OCI-LY7 (cell line): ENCODE measurements at regions of chr16 and their contacts with region 1.

Region 1: DNA sequence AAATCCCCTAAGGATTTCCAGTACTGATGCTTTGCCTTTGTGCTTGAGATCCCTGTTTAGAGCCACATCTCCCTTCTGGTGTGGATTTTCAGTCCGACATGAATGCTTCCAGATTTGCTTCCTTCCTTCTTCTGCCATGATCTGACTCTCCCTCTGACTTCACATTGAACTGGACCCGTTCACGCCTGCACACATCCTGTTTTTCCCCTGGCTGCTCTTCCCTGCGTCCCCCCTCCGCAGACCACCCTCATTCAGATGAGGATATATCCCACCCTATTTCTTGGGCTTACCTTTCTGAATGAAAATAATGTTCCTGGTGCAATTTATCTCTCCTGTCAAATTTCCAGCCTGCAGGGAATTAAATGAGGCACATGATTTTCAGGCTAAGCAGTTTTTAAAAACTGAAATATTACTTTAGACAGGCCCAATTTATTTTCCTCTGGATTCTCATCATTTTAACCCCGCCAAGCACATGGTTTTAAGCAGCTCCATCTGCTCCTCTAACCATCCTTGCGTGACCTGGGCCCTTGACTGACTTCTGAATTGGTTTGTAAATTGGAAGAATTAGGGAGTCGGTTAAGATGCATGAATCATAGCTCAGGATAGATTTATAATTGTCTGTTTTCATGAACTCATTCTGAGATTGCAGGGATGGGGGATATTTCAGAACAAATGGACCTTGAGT is 59.2 kb downstream of the BMERB1 start:
- DNase-seq: no peak
- H3K4me3 ChIP-seq: no peak overlapping the region
- H3K27ac ChIP-seq: no peak overlapping the region
- H3K4me1 ChIP-seq: no peaks in the 10 kb centered on the region
- CTCF ChIP-seq: no peak

Region 2: DNA sequence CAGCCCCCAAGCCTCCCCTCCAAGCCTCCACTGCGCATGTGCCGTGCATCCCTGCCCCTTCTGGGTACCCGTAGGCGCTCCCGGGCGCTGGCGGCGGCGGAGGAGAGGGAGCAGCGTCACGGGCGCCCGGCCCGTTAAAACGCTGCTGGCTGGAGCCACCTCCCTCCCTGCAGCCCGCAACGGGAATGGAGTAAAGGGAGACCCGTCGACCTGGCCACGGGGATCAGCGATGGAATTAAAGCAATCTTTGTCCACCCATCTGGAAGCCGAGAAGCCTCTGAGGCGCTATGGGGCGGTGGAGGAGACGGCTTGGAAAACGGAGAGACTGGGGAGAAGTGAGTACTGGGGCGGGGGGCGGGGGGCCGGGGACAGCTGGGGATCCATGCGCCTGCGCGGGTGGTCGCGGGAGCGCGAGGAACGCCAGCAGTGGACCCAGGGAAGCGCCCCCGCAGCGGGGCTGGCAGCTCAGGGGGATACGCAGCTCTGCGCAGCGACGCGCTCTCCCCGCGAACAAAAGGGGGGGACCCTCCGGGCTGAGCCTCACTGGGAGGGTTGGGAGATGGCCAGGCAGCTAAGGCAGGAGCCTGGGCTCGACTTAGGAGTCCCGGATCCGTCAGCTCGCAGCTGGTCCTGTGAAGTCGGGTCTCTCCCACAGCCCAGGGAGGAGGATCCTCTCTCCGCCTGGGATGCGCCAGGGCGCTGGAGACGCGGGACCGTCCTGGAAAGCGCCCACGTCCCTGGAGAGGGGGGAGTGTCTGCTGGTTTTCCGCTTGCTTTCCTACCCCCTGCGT is 59.0 kb before region 1 on chr16 and contains the start of gene BMERB1:
- CTCF ChIA-PET with region 1: no interaction called
- POLR2A ChIA-PET with region 1: no interaction called
- intact Hi-C with region 1: loop called (anchors 10 kb)
- DNase-seq: no peak
- H3K4me3 ChIP-seq: no peak within 1 kb of the TSS
- H3K27ac ChIP-seq: no peak within 1 kb of the TSS
- H3K4me1 ChIP-seq: no peaks in the 10 kb centered on the region
- CTCF ChIP-seq: no peak
- total RNA-seq, gene BMERB1: not detected in 2 replicates

Region 3: GRCh38 chr16:15457958-15458357 is 35.6 kb before region 1 on chr16:
- CTCF ChIA-PET with region 1: no interaction called
- POLR2A ChIA-PET with region 1: no interaction called
- intact Hi-C with region 1: no loop called
- DNase-seq: no peak
- H3K4me3 ChIP-seq: no peak overlapping the region
- H3K27ac ChIP-seq: no peak overlapping the region
- H3K4me1 ChIP-seq: no peaks in the 10 kb centered on the region
- CTCF ChIP-seq: peak; percentile 25; the same call in 1 of the 2 replicates

Region 4: GRCh38 chr16:15757630-15758251 is 264.1 kb after region 1 on chr16:
- CTCF ChIA-PET with region 1: no interaction called
- POLR2A ChIA-PET with region 1: no interaction called
- intact Hi-C with region 1: no loop called
- DNase-seq: peak; percentile 14
- H3K4me3 ChIP-seq: no peak overlapping the region
- H3K27ac ChIP-seq: no peak overlapping the region
- H3K4me1 ChIP-seq: peaks cover 5% of the 10 kb centered on the region
- CTCF ChIP-seq: no peak